ENCODE measurements at regions of chr12 and their contacts with region 1.

Region 1: GRCh38 chr12:127280393-127281275 is 986.3 kb upstream of the TMEM132C start:
- DNase-seq: peak; percentile 15 to 55 (median 44)
- H3K4me3 ChIP-seq: no peak overlapping the region
- H3K4me3 Mint-ChIP-seq: peak overlapping the region in 1 of 8 donors; percentile 14
- H3K27ac ChIP-seq: no peak overlapping the region
- H3K27ac Mint-ChIP-seq: peak overlapping the region in 1 of 7 donors; percentile 55
- H3K4me1 ChIP-seq: no peaks in the 10 kb centered on the region
- H3K4me1 Mint-ChIP-seq: peaks cover 0 to 4% (median 0%) of the 10 kb centered on the region in 4 donors
- H3K27me3 ChIP-seq: no peaks in the 10 kb centered on the region
- H3K27me3 Mint-ChIP-seq: peaks cover 3 to 5% of the 10 kb centered on the region in 2 donors

Region 2: DNA sequence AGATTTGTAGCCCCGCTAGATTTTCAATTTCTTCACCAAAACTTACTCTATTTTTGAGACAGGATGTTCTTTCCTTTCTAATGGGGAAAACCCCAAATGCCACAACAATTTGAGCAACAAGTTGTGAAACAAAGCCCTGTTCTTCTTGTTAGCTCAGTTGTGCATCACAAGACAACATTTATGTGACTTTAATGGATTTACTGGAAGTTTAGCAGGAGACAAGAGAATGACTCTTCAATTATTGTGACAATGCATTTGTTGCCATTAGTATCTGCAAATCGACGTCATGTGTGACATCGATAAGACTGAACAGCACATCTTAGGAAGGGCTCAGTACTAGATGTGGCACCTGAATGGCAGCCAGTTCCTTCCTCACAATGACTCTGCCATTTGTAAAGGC is 42.5 kb before region 1 on chr12:
- CTCF ChIA-PET with region 1: no interaction called
- POLR2A ChIA-PET with region 1: no interaction called
- intact Hi-C with region 1: loop called (anchors 1 kb)
- DNase-seq: no peak
- H3K4me3 ChIP-seq: no peak overlapping the region
- H3K4me3 Mint-ChIP-seq: no peak overlapping the region
- H3K27ac ChIP-seq: no peak overlapping the region
- H3K27ac Mint-ChIP-seq: no peak overlapping the region
- H3K4me1 ChIP-seq: no peaks in the 10 kb centered on the region
- H3K4me1 Mint-ChIP-seq: no peaks in the 10 kb centered on the region
- H3K27me3 ChIP-seq: no peaks in the 10 kb centered on the region
- H3K27me3 Mint-ChIP-seq: peaks cover 0 to 6% of the 10 kb centered on the region in 2 donors

Region 3: GRCh38 chr12:127293507-127294310 is 13.1 kb after region 1 on chr12:
- CTCF ChIA-PET with region 1: interaction called, 18 read pairs
- POLR2A ChIA-PET with region 1: no interaction called
- intact Hi-C with region 1: no loop called
- DNase-seq: peak in 4 of 5 donors; percentile 4 to 33 (median 24)
- H3K4me3 ChIP-seq: no peak overlapping the region
- H3K4me3 Mint-ChIP-seq: no peak overlapping the region
- H3K27ac ChIP-seq: no peak overlapping the region
- H3K27ac Mint-ChIP-seq: no peak overlapping the region
- H3K4me1 ChIP-seq: no peaks in the 10 kb centered on the region
- H3K4me1 Mint-ChIP-seq: no peaks in the 10 kb centered on the region
- H3K27me3 ChIP-seq: no peaks in the 10 kb centered on the region
- H3K27me3 Mint-ChIP-seq: peaks cover 2% of the 10 kb centered on the region in 2 donors

Measured in CD4-positive, alpha-beta memory T cell (primary cell).